GM10248 (cell line): ENCODE measurements at regions of chr10 and their contacts with region 1.

Region 1: DNA sequence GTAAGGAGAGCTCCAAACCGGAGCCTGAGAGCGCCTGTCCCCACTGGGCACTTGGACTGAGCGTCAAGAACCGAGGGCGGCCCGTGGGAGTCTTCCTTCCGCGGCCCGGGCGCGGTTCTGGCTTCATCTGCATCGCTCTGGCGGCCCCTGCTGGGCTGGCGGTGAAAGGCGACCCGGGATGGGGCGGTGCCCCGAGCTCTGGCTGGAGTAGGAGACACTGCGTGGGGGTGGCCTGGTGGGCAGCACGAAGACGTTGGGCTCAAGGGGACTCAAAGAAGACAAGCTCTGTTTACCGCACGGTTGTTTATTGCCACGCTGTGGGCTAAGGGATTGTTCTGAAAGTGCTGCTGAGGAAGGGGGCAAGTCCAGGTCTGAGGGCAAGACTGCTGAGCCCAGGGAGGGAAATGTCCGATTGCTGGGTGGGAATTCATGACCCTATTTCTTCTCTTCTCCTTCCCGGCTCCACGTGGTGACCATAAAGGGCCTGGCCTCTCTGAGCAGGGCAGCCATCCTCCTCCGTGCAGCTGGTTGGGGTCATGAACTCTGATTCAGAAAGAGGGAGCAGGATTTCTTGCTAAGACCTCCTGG is 29.8 kb downstream of the PLAU start:
- DNase-seq: peak; percentile 89
- CTCF ChIP-seq: peak; percentile 96

Region 2: GRCh38 chr10:73837072-73837471 is 103.7 kb before region 1 on chr10:
- CTCF ChIA-PET with region 1: interaction called, 21 read pairs
- POLR2A ChIA-PET with region 1: interaction called, 4 read pairs
- DNase-seq: no peak
- CTCF ChIP-seq: no peak

Region 3: GRCh38 chr10:73857446-73857845 is 83.3 kb before region 1 on chr10:
- CTCF ChIA-PET with region 1: interaction called, 15 read pairs
- POLR2A ChIA-PET with region 1: no interaction called
- DNase-seq: peak; percentile 71
- CTCF ChIP-seq: no peak

Region 4: GRCh38 chr10:73899423-73899822 is 41.3 kb before region 1 on chr10:
- CTCF ChIA-PET with region 1: interaction called, 49 read pairs
- POLR2A ChIA-PET with region 1: no interaction called
- DNase-seq: no peak
- CTCF ChIP-seq: no peak

Region 5: GRCh38 chr10:73920089-73920488 is 20.6 kb before region 1 on chr10:
- CTCF ChIA-PET with region 1: interaction called, 15 read pairs
- POLR2A ChIA-PET with region 1: interaction called, 4 read pairs
- DNase-seq: peak; percentile 54
- CTCF ChIP-seq: no peak

Region 6: GRCh38 chr10:74081192-74081803 is 140.6 kb after region 1 on chr10:
- CTCF ChIA-PET with region 1: interaction called, 15 read pairs
- POLR2A ChIA-PET with region 1: no interaction called
- DNase-seq: peak; percentile 37
- CTCF ChIP-seq: peak; percentile 64